Activated naive CD8-positive, alpha-beta T cell treated with anti-CD3 and anti-CD28 coated beads, Interleukin-2, amount 10 ng/mL, durations not matched to agents 7 days and 5 days (primary cell): ENCODE measurements at regions of chr2 and their contacts with region 1.

Region 1: DNA sequence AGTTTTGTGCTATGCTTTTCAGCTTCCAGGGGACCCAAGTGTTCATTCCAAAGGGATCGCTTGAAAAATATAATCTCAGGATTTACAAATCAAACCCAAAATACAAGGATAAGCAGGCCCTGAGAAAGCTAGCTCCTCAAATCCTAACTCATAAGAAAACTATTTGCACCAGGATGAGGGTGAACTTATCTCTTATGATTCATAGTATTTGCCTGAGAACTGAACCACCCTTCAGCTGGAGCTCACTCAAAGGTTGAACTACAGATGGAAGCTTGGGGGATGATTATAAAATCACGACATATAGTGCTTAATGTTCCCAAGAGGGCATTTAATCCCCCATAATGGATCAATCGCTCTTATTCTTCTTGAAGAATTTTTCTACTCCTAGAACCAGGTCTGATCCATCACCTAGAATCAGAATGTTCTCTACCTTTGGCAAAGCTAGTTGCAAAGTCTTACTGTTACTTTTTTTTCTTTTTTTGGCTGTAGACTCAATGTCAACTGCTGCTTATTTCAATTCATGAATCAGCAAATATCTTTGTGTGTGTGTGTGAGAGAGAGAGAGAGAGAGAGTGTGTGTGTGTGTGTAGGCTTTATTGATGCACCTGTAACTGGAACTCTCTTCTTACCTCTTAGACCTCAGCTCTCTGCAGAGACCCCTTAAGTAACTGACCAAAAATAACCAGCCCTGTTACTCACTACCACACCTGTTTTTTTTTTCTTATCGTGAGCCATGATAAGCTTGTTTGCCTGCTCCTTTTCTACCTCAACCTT is 44.8 kb downstream of the ARL4C start:
- DNase-seq: no peak
- ATAC-seq: peak; percentile 9
- H3K4me3 Mint-ChIP-seq: peak overlapping the region; percentile 91
- H3K27ac Mint-ChIP-seq: peak overlapping the region; percentile 90
- H3K4me1 Mint-ChIP-seq: peaks cover 72% of the 10 kb centered on the region
- H3K27me3 Mint-ChIP-seq: no peaks in the 10 kb centered on the region

Region 2: GRCh38 chr2:234368861-234369261 is 83.2 kb before region 1 on chr2:
- POLR2A ChIA-PET with region 1: interaction called, 12 read pairs
- DNase-seq: peak; percentile 53
- ATAC-seq: peak; percentile 84
- H3K4me3 Mint-ChIP-seq: peak overlapping the region; percentile 63
- H3K27ac Mint-ChIP-seq: peak overlapping the region; percentile 92
- H3K4me1 Mint-ChIP-seq: peaks cover 70% of the 10 kb centered on the region
- H3K27me3 Mint-ChIP-seq: no peaks in the 10 kb centered on the region

Region 3: DNA sequence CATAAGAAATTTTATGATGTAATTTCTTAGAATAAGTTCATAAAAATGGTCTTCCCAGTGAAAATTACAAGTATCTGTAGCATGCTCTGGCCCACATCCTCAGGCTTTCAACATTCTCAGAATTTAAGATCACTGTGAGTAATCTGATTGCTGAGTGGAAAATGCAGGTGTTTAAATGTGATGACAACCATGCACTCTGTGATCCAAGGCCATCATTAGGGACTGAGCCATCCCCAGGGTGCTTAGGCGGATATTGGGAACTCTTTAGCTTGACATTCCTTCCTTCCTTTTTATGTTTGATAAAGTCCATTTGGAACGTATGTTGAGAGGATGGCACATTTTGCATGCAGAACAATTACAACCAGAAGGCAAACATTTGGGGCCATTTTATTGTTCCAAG is 50.6 kb before region 1 on chr2:
- POLR2A ChIA-PET with region 1: interaction called, 11 read pairs
- DNase-seq: no peak
- ATAC-seq: peak; percentile 90
- H3K4me3 Mint-ChIP-seq: peak overlapping the region; percentile 34
- H3K27ac Mint-ChIP-seq: peak overlapping the region; percentile 89
- H3K4me1 Mint-ChIP-seq: peaks cover 63% of the 10 kb centered on the region
- H3K27me3 Mint-ChIP-seq: no peaks in the 10 kb centered on the region

Region 4: GRCh38 chr2:234478121-234478858 is 26.3 kb after region 1 on chr2:
- POLR2A ChIA-PET with region 1: interaction called, 247 read pairs
- DNase-seq: no peak
- ATAC-seq: peak; percentile 35
- H3K4me3 Mint-ChIP-seq: no peak overlapping the region
- H3K27ac Mint-ChIP-seq: peak overlapping the region; percentile 64
- H3K4me1 Mint-ChIP-seq: peaks cover 30% of the 10 kb centered on the region
- H3K27me3 Mint-ChIP-seq: no peaks in the 10 kb centered on the region